CD4-positive, alpha-beta T cell (primary cell): ENCODE measurements at regions of chr15 and their contacts with region 1.

Region 1: DNA sequence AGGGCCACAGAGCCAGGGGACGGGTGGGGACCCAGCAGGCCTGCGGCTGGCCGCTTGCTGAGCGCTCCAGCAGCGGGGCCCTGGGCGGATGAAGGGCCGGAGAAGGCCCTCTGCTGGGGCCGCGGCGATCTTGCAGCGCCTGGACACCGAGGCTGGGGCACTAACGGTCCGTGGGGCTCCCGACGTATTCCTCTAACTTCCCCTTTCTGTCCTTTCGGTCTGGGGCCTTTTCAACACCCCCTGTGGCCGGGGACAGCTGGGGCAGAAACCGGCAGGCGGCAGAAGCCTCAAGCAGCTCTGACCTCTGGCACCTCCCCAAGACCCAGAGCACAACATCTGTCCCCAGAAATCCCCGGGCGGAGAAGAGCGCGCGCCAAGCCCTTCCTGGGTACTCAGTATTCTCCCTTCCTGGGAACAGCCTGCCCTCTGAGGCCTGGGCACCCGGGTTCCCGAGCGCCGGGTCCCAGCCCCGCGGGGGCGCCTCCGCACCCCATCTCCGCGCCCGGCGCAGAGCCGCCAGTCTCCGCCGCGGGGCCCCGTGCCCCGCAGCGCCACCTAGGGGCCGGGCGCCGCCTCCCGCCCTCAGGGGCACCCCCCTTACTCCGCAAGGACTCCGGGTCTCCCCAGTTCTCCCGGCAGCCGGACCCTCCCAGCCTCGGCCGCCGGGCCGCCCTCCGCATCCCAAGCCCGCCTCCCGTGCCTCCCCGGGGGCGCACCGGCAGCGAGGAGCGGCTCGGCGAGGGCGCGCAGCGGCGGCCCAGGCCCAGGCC is 582 bp upstream of the SLCO3A1 start:
- DNase-seq: peak; percentile 45 to 90 (median 72)
- ATAC-seq: peak; percentile 52
- H3K4me3 ChIP-seq: peak overlapping the region; percentile 73
- H3K4me3 Mint-ChIP-seq: peak overlapping the region; percentile 94
- H3K27ac ChIP-seq: peak overlapping the region; percentile 73
- H3K27ac Mint-ChIP-seq: peak overlapping the region; percentile 92
- H3K4me1 ChIP-seq: peaks cover 68% of the 10 kb centered on the region
- H3K4me1 Mint-ChIP-seq: peaks cover 72% of the 10 kb centered on the region
- H3K27me3 ChIP-seq: no peaks in the 10 kb centered on the region
- H3K27me3 Mint-ChIP-seq: no peaks in the 10 kb centered on the region
- CTCF ChIP-seq: peak; percentile 53

Region 2: DNA sequence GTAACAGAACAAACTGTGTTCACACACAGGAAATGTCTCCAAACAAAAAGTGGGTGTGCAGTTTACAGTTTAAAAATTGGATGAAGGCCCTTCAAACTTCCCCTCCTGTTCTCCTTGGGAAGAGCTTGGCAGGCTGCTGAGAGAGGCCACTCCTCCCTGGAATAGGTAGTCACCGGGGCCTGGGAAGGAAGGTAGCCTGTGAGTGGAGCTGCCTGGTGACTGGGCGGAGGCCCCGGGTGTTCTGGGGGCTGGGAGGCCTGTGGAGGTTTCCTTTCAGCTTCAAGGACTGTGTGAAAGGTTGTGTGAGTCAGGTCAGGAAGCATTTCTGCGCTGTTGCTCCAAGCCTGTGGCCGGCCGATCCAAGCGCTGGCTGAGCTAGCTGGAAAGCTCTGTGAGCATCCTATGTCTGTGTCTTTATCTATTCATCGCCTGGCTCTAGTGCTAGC is 14.7 kb after region 1 on chr15:
- CTCF ChIA-PET with region 1: interaction called, 7 read pairs
- POLR2A ChIA-PET with region 1: interaction called, 12 read pairs
- intact Hi-C with region 1: no loop called
- DNase-seq: peak in 1 of 14 experiments; percentile 40
- ATAC-seq: peak; percentile 12
- H3K4me3 ChIP-seq: no peak overlapping the region
- H3K4me3 Mint-ChIP-seq: peak overlapping the region; percentile 35
- H3K27ac ChIP-seq: no peak overlapping the region
- H3K27ac Mint-ChIP-seq: no peak overlapping the region
- H3K4me1 ChIP-seq: peaks cover 74% of the 10 kb centered on the region
- H3K4me1 Mint-ChIP-seq: peaks cover 87% of the 10 kb centered on the region
- H3K27me3 ChIP-seq: no peaks in the 10 kb centered on the region
- H3K27me3 Mint-ChIP-seq: no peaks in the 10 kb centered on the region
- CTCF ChIP-seq: no peak

Region 3: GRCh38 chr15:91926908-91927270 is 74.0 kb after region 1 on chr15:
- CTCF ChIA-PET with region 1: interaction called, 3 read pairs
- POLR2A ChIA-PET with region 1: no interaction called
- intact Hi-C with region 1: loop called in 1 of 2 experiments (anchors 5 kb)
- DNase-seq: no peak
- ATAC-seq: no peak
- H3K4me3 ChIP-seq: no peak overlapping the region
- H3K4me3 Mint-ChIP-seq: no peak overlapping the region
- H3K27ac ChIP-seq: no peak overlapping the region
- H3K27ac Mint-ChIP-seq: no peak overlapping the region
- H3K4me1 ChIP-seq: peaks cover 18% of the 10 kb centered on the region
- H3K4me1 Mint-ChIP-seq: peaks cover 70% of the 10 kb centered on the region
- H3K27me3 ChIP-seq: no peaks in the 10 kb centered on the region
- H3K27me3 Mint-ChIP-seq: no peaks in the 10 kb centered on the region
- CTCF ChIP-seq: no peak

Region 4: DNA sequence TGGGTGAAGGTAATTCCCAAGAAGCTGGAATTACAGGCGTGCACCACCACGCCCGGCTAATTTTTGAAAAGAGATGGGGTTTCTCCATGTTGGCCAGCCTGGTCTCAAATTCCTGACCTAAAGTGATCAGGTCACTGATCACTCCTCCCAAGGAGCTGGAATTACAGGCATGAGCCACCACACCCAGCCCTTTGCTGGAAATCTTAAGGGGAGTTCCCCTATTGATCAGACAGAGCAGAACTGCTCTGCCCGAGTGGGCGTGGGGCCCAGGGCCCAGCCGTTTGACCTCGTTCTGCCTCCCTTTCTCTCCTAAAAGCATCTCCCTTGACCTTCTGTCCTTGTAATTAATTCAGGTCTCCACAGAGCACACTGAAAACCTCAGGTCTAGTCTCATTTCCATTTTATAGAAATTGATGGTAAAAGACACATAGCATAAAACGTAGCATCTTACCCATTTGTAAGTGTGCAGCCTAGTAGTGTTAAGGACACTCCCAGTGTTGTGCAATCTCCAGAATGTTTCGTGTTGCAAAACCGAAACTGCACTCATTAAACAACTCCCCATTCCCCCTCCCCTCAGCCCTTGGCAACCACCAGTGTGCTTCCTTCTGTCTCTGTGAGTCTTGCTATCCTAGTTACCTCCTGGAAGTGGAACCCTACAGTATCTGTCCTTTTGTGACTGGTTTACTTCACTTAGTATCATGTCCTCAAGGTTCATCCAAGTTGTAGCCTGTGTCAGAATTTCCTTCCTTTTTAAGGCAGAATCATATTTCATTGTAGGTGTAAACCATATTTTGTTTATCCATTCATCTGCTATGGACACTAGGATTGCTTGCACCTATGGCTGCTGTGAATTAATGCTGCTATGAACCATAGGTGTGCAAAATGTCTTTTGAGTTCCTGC is 90.0 kb after region 1 on chr15:
- CTCF ChIA-PET with region 1: interaction called, 5 read pairs
- POLR2A ChIA-PET with region 1: interaction called, 15 read pairs
- intact Hi-C with region 1: loop called (anchors 2 kb)
- DNase-seq: peak in 11 of 14 experiments; percentile 5 to 82 (median 16)
- ATAC-seq: peak; percentile 87
- H3K4me3 ChIP-seq: no peak overlapping the region
- H3K4me3 Mint-ChIP-seq: no peak overlapping the region
- H3K27ac ChIP-seq: peak overlapping the region in 1 of 2 donors; percentile 38
- H3K27ac Mint-ChIP-seq: peak overlapping the region; percentile 14
- H3K4me1 ChIP-seq: peaks cover 66% of the 10 kb centered on the region
- H3K4me1 Mint-ChIP-seq: peaks cover 87% of the 10 kb centered on the region
- H3K27me3 ChIP-seq: no peaks in the 10 kb centered on the region
- H3K27me3 Mint-ChIP-seq: no peaks in the 10 kb centered on the region
- CTCF ChIP-seq: no peak

Region 5: GRCh38 chr15:92077353-92078085 is 224.6 kb after region 1 on chr15:
- CTCF ChIA-PET with region 1: interaction called, 4 read pairs
- POLR2A ChIA-PET with region 1: no interaction called
- intact Hi-C with region 1: loop called (anchors 1 to 2 kb)
- DNase-seq: peak; percentile 36 to 75 (median 46)
- ATAC-seq: peak; percentile 73
- H3K4me3 ChIP-seq: no peak overlapping the region
- H3K4me3 Mint-ChIP-seq: no peak overlapping the region
- H3K27ac ChIP-seq: no peak overlapping the region
- H3K27ac Mint-ChIP-seq: no peak overlapping the region
- H3K4me1 ChIP-seq: peaks cover 34% of the 10 kb centered on the region
- H3K4me1 Mint-ChIP-seq: peaks cover 33% of the 10 kb centered on the region
- H3K27me3 ChIP-seq: no peaks in the 10 kb centered on the region
- H3K27me3 Mint-ChIP-seq: no peaks in the 10 kb centered on the region
- CTCF ChIP-seq: peak; percentile 64